ENCODE measurements at regions of chr13 and their contacts with region 1.

Region 1: DNA sequence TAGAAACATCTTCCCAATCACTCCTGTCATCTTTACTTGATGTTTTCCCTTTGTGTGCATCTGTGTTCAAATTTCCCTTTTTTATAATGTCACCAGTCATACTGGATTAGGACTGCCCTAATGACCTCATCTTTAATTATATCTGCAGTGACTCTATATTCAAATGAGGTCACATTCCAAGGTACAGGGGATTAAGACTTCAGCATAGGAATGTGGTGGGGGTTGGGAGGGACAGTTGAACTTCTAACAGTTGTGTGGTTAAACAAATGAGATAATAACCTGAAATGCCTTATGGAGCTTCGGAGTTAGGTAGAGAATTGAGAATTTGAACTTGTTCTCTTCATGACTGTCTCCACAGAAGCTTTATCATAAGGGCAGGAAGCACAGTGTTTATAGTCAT is 23.0 kb downstream of the PAN3 start:
- DNase-seq: peak in 1 of 2 experiments; percentile 48
- H3K4me3 ChIP-seq: no peak overlapping the region
- H3K27ac ChIP-seq: peak overlapping the region; percentile 21; the same call in 1 of the 2 replicates
- H3K4me1 ChIP-seq: peaks cover 12% of the 10 kb centered on the region
- H3K27me3 ChIP-seq: no peaks in the 10 kb centered on the region
- CTCF ChIP-seq: no peak

Region 2: DNA sequence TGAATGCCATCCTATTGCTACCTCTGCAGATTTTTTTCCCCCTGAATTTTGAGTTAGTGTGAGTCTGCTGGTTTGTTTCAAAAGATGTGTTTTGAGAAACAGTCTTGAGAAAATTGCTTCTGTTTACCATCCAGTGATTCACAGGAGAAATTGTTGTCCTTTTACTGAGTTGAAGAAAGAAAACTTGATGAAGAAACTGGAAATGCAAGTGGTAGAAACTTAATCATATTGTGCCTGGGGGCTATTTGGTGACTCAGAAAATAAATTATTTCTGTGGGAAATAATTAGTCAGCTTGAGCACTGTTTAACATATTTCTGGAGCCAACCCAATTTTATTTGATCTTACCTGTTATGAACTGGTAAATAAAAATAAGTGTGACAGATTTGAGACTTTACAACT is 12.4 kb after region 1 on chr13:
- CTCF ChIA-PET with region 1: no interaction called
- POLR2A ChIA-PET with region 1: no interaction called
- intact Hi-C with region 1: loop called (anchors 2 kb)
- DNase-seq: peak in 1 of 2 experiments; percentile 91
- H3K4me3 ChIP-seq: no peak overlapping the region
- H3K27ac ChIP-seq: peak overlapping the region; percentile 87
- H3K4me1 ChIP-seq: peaks cover 57% of the 10 kb centered on the region
- H3K27me3 ChIP-seq: no peaks in the 10 kb centered on the region
- CTCF ChIP-seq: no peak

Measured in PC-9 (cell line).